Dendritic cell treated with granulocyte-macrophage colony-stimulating factor and Interleukin-4, amounts not matched to agents 40 ng/mL and 50 ng/mL, for 4 days (primary cell): ENCODE measurements at regions of chr7 and their contacts with region 1.

Region 1: DNA sequence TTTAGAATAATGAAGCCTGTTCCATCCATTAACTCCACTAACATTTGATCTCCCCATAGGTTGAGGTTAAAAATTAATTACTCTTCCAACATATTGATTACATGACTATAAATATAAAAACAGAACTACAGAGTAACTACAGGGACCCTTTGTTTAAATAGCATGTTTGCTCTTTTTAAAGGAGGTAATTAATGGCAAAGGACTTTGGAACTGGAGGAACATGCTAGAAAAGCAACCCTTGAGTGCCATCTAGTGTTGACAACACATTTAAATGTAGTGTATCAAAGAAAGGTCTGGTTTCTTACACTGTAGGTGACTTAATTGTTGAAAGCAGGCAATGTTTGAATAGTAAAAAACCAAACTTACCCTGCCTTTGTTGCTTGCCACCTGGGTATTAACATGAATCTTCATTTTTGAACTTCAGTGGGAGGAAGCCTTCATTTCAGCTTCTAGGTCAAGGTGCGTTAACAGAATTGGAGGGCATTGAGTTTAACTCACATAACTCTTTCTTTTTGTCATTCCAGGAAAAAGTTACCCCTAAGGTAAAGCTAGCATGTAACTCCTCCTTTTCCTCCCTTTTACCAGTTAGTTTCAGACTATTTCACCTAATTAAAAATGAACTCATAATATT is 52.6 kb upstream of the CAPZA2 start:
- H3K4me3 Mint-ChIP-seq: no peak overlapping the region
- H3K27ac Mint-ChIP-seq: no peak overlapping the region
- H3K4me1 Mint-ChIP-seq: peaks cover 10% of the 10 kb centered on the region
- H3K27me3 Mint-ChIP-seq: no peaks in the 10 kb centered on the region

Region 2: GRCh38 chr7:116258734-116259133 is 551.0 kb before region 1 on chr7:
- intact Hi-C with region 1: loop called (anchors 2 kb)
- H3K4me3 Mint-ChIP-seq: no peak overlapping the region
- H3K27ac Mint-ChIP-seq: no peak overlapping the region
- H3K4me1 Mint-ChIP-seq: no peaks in the 10 kb centered on the region
- H3K27me3 Mint-ChIP-seq: peaks cover 2% of the 10 kb centered on the region

Region 3: DNA sequence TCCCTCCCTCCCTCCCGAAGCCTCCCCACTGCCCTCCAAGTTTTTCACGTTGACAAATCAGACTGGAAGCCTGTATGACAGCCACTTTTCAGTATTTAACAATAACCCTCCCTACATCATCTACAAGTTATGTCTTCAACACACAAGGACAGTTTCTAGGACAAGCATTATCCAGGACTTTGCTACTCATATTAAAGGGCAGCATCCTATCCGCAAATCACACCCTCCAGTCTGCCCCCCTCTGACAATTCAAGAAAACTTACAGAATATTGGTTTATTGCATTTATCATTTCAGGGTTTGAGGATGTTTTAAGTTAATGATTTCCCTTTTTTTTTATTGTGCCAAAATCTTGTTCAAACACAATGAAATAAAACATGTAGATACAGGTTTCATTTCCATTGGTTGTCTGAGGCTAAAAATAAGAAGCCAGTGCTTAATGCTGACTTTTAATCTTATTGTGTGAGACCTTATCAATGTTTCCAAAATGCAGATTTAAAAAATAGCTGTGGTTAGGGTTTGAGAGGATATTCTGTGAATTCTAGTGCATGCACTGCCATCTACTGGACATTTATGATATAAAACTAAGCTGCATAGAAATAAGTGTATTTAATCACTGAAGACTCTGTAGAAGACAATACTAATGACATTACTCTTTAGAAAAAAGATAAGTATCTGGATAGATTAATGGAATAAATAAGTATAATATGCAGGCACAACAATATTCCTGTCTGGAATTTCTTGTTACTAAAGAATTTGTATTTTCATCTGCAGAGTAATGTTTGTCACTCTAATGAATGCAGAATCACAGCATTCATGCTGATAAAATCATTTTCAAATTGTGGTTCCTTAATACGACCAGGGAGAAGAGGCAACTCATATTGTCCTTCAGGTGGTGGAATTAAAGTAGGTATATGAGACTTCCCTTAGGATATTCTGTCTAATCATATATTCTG is 220.8 kb before region 1 on chr7:
- intact Hi-C with region 1: loop called (anchors 1 kb)
- H3K4me3 Mint-ChIP-seq: no peak overlapping the region
- H3K27ac Mint-ChIP-seq: no peak overlapping the region
- H3K4me1 Mint-ChIP-seq: peaks cover 30% of the 10 kb centered on the region
- H3K27me3 Mint-ChIP-seq: peaks cover 23% of the 10 kb centered on the region

Region 4: DNA sequence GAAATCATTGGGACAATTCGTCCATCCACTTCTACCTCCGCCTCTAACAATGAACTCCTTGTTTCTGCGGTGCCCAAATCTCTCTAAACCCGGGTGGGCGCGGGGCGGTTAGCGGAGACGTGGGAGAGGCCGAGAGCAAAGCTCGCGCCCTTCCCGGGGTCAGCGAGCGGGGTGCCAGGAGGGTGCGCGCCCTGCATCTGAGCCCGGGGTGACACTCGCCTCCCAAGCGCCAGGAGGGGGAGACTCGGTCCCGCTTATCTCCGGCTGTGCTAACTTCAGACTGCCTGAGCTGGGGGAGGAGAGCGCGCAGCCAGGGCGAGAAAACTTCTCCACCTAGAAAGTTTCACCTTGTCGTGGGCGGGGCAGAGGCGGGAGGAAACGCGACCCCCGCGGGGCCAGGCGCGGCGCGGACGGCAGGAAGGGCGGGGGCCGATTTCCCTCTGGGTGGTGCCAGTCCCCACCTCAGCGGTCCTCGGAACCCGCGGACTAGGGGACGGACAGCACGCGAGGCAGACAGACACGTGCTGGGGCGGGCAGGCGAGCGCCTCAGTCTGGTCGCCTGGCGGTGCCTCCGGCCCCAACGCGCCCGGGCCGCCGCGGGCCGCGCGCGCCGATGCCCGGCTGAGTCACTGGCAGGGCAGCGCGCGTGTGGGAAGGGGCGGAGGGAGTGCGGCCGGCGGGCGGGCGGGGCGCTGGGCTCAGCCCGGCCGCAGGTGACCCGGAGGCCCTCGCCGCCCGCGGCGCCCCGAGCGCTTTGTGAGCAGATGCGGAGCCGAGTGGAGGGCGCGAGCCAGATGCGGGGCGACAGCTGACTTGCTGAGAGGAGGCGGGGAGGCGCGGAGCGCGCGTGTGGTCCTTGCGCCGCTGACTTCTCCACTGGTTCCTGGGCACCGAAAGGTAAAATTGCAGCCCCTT is 137.8 kb before region 1 on chr7 and contains the start of gene MET:
- intact Hi-C with region 1: loop called (anchors 2 kb)
- H3K4me3 Mint-ChIP-seq: peak within 1 kb of the TSS; percentile 69
- H3K27ac Mint-ChIP-seq: no peak within 1 kb of the TSS
- H3K4me1 Mint-ChIP-seq: peaks cover 23% of the 10 kb centered on the region
- H3K27me3 Mint-ChIP-seq: peaks cover 50% of the 10 kb centered on the region

Region 5: DNA sequence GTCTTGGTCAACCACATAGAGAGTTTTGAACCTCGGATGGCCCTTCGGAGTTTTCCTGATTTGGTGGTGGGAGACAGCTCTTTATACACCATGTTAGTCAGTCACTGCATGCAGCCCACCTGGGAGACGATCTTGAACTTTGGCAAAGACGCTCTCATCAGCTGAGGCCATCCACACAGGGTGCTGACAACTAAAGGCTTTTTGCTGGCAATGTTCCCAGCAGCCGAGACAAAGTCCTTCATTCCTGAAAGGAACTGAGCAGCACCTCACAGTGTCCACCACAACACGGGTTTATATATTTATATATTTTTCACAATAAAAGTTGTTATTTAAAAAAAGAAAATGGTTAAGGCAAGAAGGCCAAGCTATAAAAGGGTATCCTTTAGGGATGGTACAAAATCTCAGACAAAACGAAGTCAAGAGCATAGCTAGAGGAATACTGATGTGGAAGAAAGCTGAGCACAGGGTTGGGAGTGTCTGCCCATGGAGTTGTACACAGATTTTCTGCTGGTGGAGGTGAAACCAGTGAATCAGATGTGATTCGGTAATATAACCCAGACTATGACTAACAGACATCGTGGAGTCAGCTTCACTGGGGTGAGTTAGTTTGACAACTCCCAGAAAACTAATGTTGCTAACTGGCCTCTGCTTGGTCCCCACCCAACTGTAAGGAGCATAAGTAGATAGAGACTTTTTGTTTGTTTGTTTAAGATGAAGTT is 25.2 kb after region 1 on chr7:
- intact Hi-C with region 1: no loop called
- H3K4me3 Mint-ChIP-seq: no peak overlapping the region
- H3K27ac Mint-ChIP-seq: no peak overlapping the region
- H3K4me1 Mint-ChIP-seq: peaks cover under 1% of the 10 kb centered on the region
- H3K27me3 Mint-ChIP-seq: peaks cover 3% of the 10 kb centered on the region

Region 6: GRCh38 chr7:116862951-116863670 is 53.4 kb after region 1 on chr7:
- intact Hi-C with region 1: loop called (anchors 1 kb)
- H3K4me3 Mint-ChIP-seq: peak overlapping the region; percentile 100
- H3K27ac Mint-ChIP-seq: peak overlapping the region; percentile 98
- H3K4me1 Mint-ChIP-seq: peaks cover 58% of the 10 kb centered on the region
- H3K27me3 Mint-ChIP-seq: no peaks in the 10 kb centered on the region

Region 7: GRCh38 chr7:117411539-117411938 is 601.8 kb after region 1 on chr7:
- intact Hi-C with region 1: no loop called
- H3K4me3 Mint-ChIP-seq: no peak overlapping the region
- H3K27ac Mint-ChIP-seq: no peak overlapping the region
- H3K4me1 Mint-ChIP-seq: no peaks in the 10 kb centered on the region
- H3K27me3 Mint-ChIP-seq: no peaks in the 10 kb centered on the region